GM10248 (cell line): ENCODE measurements at regions of chr1 and their contacts with region 1.

Region 1: GRCh38 chr1:197915862-197916499 is 1.2 kb upstream of the LHX9 start:
- DNase-seq: no peak
- CTCF ChIP-seq: peak; percentile 12

Region 2: DNA sequence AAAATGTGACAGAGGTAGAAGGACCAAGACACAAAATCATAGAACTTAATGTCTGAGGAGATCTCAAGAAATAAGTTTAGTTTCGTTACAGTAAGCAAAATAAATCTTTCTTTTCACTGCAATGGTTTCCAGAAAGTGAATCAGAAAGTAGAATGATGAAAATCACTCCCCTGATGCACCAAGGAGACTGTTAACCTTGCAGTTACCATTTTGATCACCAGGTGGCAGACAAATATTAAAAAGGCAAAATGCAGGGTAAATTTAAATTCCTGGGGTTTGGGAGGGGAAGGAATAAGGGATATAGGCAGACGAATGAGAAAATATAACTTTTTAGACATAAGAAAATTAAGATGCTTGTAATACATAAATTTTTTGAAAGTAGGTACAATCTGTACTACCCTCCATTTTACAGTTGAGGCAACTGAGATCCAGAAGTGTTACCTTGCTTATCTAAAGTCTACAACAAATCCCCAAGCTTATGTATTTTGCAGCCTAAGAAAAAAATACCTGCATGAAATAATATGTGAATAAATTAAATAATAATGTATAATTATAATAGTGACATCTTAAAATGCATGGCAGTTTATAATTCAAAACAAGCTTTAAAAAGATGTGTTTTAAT is 394.8 kb before region 1 on chr1:
- CTCF ChIA-PET with region 1: interaction called, 10 read pairs
- POLR2A ChIA-PET with region 1: no interaction called
- DNase-seq: peak; percentile 18
- CTCF ChIP-seq: peak; percentile 78

Region 3: DNA sequence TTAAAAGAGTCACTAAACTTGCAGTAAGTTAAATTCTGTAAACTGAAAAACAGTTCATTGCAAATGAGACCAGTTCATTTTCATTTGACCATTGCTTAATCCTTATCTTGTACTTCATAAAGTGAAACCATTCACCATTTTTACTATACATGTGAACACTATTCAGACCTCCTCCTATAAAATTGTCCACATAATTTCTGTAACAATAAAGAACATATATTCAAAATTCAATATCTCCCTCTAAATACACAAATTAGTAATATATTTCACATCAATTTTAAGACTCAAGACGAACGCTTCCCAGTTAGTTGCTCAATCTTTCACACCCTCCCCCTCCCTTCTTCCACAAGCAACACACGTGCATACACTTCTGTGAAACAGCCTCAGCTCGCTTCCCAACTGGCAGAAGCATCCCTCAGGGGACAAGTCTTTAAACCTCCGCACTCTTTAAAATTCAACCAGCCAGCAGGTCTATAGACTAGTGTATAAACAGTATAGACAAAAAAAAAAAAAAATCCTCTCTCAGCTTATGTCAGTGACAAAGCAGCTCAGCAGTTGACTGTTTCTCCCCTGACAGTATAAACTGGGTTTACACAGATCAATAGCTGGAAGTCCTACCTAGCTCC is 240.3 kb before region 1 on chr1:
- CTCF ChIA-PET with region 1: no interaction called
- POLR2A ChIA-PET with region 1: no interaction called
- DNase-seq: no peak
- CTCF ChIP-seq: no peak

Region 4: GRCh38 chr1:197736644-197737043 is 179.3 kb before region 1 on chr1:
- CTCF ChIA-PET with region 1: no interaction called
- POLR2A ChIA-PET with region 1: no interaction called
- DNase-seq: no peak
- CTCF ChIP-seq: no peak

Region 5: DNA sequence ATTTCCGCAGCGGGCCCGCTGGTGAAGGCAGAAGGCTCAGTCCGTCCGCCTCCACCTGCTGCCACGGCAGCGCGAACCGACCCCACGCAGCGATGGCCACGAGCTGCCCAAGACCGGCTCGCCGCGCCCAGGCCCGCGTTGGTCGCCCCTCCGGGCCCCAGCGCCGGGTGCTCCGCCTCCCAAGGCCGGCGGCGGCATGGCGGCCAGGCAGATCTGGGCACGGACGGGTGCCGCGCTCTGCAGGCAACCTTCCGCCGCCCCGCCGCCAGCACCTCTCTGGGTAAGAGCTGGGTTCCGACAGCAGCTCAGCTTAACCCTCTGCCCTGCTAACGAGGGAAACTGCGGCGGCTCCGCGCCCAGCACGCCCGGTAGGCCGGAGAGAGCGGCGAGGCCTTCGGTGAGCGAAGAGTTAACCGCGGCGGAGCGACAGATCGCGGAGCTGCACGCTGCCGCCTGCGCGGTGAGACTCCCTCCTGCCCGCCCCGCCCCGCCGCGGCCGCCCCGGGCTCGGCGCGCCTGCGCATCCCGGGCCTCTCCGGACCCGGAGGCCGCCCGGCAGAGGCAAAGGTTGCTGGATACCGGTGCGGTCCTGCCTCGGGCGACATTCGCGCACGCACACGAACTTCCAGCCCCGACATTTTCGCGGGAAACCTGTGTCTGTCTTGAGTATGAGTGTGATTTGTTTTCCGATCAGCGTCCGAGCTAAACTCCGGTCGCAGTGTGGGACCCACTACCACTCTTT is 13.4 kb before region 1 on chr1 and contains the start of gene C1orf53:
- CTCF ChIA-PET with region 1: interaction called, 10 read pairs
- POLR2A ChIA-PET with region 1: interaction called, 3 read pairs
- DNase-seq: peak; percentile 93
- CTCF ChIP-seq: no peak

Region 6: GRCh38 chr1:198047913-198048312 is 131.9 kb after region 1 on chr1:
- CTCF ChIA-PET with region 1: no interaction called
- POLR2A ChIA-PET with region 1: no interaction called
- DNase-seq: no peak
- CTCF ChIP-seq: no peak

Region 7: DNA sequence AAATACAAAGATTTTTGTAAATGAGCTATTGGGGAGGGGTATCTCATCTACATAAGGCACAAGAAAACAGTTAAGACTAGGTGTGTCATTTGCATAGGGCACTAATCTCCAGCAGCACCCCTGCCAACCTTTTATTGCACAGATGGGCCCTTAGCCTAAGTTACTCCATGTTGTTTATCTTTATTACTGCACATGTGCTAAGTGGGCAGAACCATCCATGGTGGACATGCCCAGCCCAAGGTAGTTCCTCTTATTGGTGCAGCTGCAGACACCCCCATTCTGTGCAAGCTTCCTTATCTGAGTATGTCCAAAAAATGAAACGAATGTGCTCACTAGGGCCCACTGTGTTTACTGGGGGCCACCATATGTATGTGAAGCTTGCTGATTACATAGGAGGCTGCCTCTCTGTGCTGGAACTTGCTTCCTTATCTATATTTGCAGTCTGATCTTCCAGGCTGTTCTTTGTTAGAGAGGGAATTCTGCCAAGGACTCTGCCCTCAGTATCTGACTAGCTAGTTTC is 163.5 kb after region 1 on chr1:
- CTCF ChIA-PET with region 1: no interaction called
- POLR2A ChIA-PET with region 1: no interaction called
- DNase-seq: no peak
- CTCF ChIP-seq: no peak